ENCODE measurements at regions of chr6 and their contacts with region 1.

Region 1: DNA sequence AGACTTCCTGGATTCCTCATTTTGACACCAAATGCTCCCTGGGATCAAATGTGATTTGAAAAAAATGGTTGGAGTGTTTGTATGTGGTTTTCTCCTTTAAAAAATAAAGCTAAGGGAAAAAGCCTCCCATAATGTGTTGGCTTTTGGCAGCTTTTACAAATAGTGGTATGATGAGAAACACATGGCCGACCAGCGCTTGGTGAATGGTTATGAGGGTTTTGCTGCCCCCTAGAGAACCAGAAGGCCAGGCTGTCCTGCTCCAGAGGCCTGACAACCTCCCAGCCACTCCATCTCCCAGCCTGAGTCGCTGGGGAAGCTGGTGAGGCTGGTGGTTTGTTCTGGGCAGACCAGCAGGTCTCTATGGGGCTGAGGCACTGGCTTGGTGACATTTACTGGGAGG is 69.3 kb downstream of the CLIC5 start:
- DNase-seq: peak in 1 of 2 donors; percentile 27
- ATAC-seq: peak; percentile 45 to 58 (median 52)
- H3K4me3 ChIP-seq: no peak overlapping the region
- H3K27ac ChIP-seq: peak overlapping the region; percentile 32
- H3K4me1 ChIP-seq: peaks cover 66% of the 10 kb centered on the region
- H3K27me3 ChIP-seq: no peaks in the 10 kb centered on the region
- CTCF ChIP-seq: peak; percentile 30

Region 2: DNA sequence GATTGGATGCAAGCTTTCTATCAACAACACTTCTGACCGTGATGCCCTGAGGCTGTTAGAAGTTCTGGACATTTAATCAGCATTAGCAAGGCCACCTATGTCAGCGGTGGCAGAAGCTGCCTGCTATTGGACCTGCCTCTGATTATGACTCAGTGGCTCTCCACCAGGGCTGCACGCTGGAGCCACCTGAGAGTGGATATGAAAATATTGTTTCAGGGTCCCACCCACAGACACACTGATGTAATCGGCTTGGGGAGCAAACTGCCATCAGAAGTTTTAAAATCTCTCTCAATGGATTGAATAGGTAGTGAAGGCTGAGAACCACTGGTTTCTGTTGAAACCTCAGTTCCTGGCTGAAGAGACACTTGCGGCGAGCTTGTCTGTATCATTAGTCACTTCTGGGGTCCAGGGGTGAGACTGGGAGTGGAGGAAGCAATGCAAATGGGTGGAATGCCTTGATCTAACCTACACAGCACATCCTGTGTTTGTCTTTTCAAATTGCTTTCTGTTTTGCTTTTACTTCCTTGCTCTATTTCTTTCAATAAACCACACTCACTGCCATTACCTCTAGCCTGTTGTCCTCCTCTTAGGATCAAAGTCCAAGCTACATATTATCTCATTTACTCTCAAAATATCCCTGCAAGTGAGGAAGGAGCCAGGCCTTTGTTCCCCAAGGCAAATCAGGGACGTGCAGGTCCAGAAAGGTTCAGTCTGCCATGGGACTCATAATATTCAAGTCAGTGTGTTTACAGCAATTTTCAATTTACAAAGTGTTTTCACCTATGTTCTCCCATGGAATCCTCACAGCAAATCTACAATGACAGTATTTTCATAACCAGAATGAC is 65.1 kb after region 1 on chr6:
- intact Hi-C with region 1: loop called in 1 of 2 experiments (anchors 5 kb)
- DNase-seq: no peak
- ATAC-seq: peak in 3 of 4 donors; percentile 1 to 5 (median 1)
- H3K4me3 ChIP-seq: peak overlapping the region; percentile 90
- H3K27ac ChIP-seq: peak overlapping the region; percentile 99
- H3K4me1 ChIP-seq: peaks cover 69% of the 10 kb centered on the region
- H3K27me3 ChIP-seq: no peaks in the 10 kb centered on the region
- CTCF ChIP-seq: no peak